ENCODE measurements at regions of chr1 and their contacts with region 1.

Region 1: GRCh38 chr1:33295450-33296081 is 25.3 kb downstream of the A3GALT2 start:
- DNase-seq: peak; percentile 90
- ATAC-seq: peak; percentile 87

Region 2: GRCh38 chr1:33127001-33127791 is 168.4 kb before region 1 on chr1:
- intact Hi-C with region 1: loop called (anchors 5 kb)
- DNase-seq: peak; percentile 99
- ATAC-seq: peak; percentile 97

Region 3: GRCh38 chr1:33219881-33220661 is 75.5 kb before region 1 on chr1:
- intact Hi-C with region 1: loop called (anchors 2 kb)
- DNase-seq: no peak
- ATAC-seq: no peak

Region 4: DNA sequence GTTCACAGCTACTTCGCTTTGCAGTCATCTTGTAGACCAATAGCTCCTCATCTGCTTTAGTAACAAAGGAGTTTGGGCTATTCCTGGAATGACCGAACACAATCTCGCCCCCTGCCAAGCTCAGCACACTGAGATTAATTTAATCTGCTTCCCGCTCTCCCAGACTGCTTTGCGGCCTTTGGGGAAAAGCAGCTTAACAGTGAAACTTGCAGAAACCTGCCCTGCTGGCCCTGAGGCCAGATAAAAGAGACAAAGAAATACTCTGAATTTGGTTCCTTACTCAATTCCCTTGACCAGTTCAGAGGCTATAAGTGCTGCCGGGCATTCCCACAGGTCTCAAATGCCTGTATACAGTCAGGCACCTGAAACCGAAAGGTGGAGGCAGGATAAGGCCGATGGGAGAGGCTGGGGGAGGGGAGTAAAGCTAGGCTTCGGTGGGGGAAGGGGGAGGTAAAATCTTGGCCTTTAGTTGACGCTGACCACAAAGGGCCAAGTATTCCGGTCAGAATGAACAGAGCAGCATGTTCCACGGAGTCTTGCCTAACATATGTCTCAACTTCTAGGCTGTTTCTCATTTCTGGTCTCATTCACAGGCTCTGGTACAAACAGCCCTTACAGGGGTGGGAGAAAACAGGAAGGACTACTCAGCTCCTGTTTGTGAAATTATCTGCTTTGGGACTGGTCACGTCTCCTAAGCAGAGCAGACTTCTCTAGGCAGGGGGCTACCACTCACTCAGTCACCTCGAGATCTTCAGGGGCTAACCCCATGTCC is 43.1 kb after region 1 on chr1:
- intact Hi-C with region 1: no loop called
- DNase-seq: no peak
- ATAC-seq: peak; percentile 72

Region 5: GRCh38 chr1:33361532-33362235 is 66.1 kb after region 1 on chr1:
- intact Hi-C with region 1: no loop called
- DNase-seq: no peak
- ATAC-seq: peak; percentile 66

Region 6: GRCh38 chr1:33616773-33617172 is 321.2 kb after region 1 on chr1:
- intact Hi-C with region 1: loop called (anchors 2 kb)
- DNase-seq: no peak
- ATAC-seq: no peak

Measured in Right ventricle myocardium inferior (tissue), 1 donor.